ENCODE measurements at regions of chr11 and their contacts with region 1.

Region 1: DNA sequence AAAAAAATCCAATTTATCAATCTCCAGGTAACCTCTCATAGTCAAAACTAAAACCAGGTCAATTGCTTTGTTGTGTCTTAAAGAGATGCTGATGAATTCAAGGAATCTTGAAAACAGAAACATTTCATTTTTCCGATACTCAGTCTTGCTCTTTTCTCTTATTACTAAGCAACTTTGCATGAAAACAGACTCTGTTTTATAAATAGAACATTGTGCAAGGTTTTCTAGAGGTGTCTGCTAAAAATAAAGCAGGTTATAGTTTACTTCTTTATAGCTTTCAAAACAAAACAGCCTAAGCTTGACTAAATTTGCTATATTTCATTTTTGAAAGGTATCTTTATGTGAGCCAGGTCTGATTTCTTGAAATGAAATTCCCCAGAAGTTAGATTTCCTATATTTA is 109.3 kb downstream of the ARL14EP start:
- DNase-seq: no peak
- H3K4me3 ChIP-seq: no peak overlapping the region
- H3K27ac ChIP-seq: peak overlapping the region in 2 of 4 donors; percentile 39 to 60
- H3K4me1 ChIP-seq: peaks cover 0 to 43% (median 37%) of the 10 kb centered on the region in 4 donors
- H3K27me3 ChIP-seq: no peaks in the 10 kb centered on the region
- CTCF ChIP-seq: no peak
- EP300 ChIP-seq: no peak
- POLR2A ChIP-seq: no peak

Region 2: DNA sequence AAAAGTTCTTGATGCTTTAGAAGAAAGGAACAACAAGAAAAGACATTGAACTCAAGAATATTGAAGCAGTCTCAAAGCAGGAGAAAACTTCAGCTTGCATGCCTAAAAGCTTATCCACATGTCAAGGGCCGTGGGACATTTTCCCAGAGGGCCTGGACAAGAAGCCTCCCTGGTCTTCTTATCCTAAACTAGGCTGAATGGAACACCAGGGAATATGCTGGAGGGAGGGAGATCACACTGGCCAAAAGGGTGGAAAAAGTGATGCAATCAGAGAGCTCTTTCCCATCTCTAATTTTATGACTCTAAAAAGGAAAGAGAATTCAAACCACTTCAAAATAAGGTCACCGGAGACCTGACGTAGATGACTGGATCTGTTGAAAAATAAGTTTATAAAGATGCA is 46.7 kb after region 1 on chr11:
- intact Hi-C with region 1: loop called (anchors 5 kb)
- DNase-seq: peak; percentile 71
- H3K4me3 ChIP-seq: no peak overlapping the region
- H3K27ac ChIP-seq: peak overlapping the region in 3 of 4 donors; percentile 65 to 73 (median 73)
- H3K4me1 ChIP-seq: peaks cover 0 to 48% (median 43%) of the 10 kb centered on the region in 4 donors
- H3K27me3 ChIP-seq: no peaks in the 10 kb centered on the region
- CTCF ChIP-seq: no peak
- EP300 ChIP-seq: no peak
- POLR2A ChIP-seq: no peak

Region 3: DNA sequence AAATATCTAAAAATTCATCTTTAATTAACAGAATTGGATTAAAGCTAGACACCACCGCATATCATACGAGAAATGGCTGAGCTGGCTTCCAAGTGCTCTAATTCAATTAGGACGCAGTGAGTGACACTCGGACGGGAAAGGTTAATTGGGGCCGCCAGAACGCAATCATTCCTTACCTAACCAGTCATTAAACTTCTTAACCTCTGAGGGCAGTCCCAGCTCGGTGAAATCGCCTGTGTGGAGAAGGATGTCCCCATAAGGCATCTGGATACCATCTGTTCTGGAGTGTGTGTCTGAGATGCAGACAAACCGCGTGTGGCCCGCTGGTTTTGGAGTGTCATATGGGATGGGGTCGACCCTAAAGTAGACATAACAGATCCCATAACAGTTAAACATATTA is 103.6 kb after region 1 on chr11:
- intact Hi-C with region 1: no loop called
- DNase-seq: no peak
- H3K4me3 ChIP-seq: no peak overlapping the region
- H3K27ac ChIP-seq: no peak overlapping the region
- H3K4me1 ChIP-seq: peaks cover 0 to 14% (median 9%) of the 10 kb centered on the region in 4 donors
- H3K27me3 ChIP-seq: no peaks in the 10 kb centered on the region
- CTCF ChIP-seq: no peak
- EP300 ChIP-seq: no peak
- POLR2A ChIP-seq: no peak

Measured in sigmoid colon (tissue), 7 donors.